Aorta (tissue), 5 donors: ENCODE measurements at regions of chr3 and their contacts with region 1.

Region 1: DNA sequence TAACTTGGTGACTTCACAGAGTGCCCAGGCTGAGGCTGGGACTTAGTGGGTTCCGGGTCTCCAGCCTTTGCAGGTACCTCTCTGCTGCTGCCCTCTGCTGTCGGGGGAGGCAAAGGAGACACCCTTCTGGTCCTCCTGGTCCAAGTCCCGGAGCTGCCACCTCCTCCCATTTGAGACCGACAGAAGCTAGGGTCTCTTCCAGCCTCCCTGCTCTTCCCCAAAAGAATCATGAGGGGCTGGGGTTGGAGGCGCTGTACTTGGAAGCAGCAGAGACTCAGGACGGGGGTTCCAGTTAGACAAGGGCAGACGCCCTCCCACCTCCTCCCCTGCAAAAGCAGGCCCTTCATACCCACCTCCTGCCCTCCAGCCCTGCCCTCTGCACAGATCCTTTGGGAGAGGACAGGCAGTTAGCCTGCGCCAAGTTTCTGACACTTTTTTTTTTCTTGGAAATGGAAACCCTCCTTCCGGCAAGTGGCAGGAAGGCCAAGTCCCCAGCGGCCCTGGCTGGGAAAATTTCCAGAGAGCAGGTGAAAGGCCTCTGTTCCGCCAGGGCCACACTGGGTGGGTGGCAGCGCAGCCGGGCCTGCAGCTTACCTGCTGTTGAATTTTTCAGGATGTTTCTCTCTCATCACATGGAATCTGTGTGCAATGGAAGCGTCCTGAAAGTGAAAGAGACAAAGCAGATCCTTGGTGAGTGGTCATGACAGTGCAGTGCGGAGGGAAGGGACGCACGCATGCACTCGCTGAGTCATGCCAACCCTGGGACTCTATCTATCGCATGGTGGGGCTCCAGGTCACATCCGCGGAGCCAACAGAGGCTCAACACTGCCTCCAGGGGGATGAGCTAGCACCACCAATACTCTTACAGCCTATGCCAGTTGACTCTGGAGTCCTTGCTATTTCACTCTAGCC is 119.9 kb downstream of the DGKG start:
- DNase-seq: peak; percentile 84 to 87
- ATAC-seq: peak; percentile 84
- H3K4me3 ChIP-seq: no peak overlapping the region
- H3K27ac ChIP-seq: no peak overlapping the region
- H3K4me1 ChIP-seq: no peaks in the 10 kb centered on the region
- H3K27me3 ChIP-seq: no peaks in the 10 kb centered on the region

Region 2: GRCh38 chr3:186108941-186109865 is 133.0 kb before region 1 on chr3 and contains the start of gene ETV5:
- intact Hi-C with region 1: loop called in 1 of 2 experiments (anchors 5 kb)
- DNase-seq: peak; percentile 99 to 100
- ATAC-seq: peak; percentile 97
- H3K4me3 ChIP-seq: peak within 1 kb of the TSS; percentile 75 to 87
- H3K27ac ChIP-seq: peak within 1 kb of the TSS; percentile 79 to 87
- H3K4me1 ChIP-seq: no peaks in the 10 kb centered on the region
- H3K27me3 ChIP-seq: no peaks in the 10 kb centered on the region
- total RNA-seq, gene ETV5: 25.5 to 34.0 TPM